ENCODE measurements at regions of chr12 and their contacts with region 1.

Region 1: GRCh38 chr12:106247674-106248311 is at the start of gene CKAP4:
- DNase-seq: peak; percentile 37
- H3K4me3 Mint-ChIP-seq: peak within 1 kb of the TSS; percentile 66
- H3K27ac Mint-ChIP-seq: peak within 1 kb of the TSS; percentile 15
- H3K4me1 Mint-ChIP-seq: no peaks in the 10 kb centered on the region
- H3K27me3 Mint-ChIP-seq: peaks cover 14% of the 10 kb centered on the region
- total RNA-seq, gene CKAP4: 4.8 and 5.1 TPM in 2 replicates

Region 2: DNA sequence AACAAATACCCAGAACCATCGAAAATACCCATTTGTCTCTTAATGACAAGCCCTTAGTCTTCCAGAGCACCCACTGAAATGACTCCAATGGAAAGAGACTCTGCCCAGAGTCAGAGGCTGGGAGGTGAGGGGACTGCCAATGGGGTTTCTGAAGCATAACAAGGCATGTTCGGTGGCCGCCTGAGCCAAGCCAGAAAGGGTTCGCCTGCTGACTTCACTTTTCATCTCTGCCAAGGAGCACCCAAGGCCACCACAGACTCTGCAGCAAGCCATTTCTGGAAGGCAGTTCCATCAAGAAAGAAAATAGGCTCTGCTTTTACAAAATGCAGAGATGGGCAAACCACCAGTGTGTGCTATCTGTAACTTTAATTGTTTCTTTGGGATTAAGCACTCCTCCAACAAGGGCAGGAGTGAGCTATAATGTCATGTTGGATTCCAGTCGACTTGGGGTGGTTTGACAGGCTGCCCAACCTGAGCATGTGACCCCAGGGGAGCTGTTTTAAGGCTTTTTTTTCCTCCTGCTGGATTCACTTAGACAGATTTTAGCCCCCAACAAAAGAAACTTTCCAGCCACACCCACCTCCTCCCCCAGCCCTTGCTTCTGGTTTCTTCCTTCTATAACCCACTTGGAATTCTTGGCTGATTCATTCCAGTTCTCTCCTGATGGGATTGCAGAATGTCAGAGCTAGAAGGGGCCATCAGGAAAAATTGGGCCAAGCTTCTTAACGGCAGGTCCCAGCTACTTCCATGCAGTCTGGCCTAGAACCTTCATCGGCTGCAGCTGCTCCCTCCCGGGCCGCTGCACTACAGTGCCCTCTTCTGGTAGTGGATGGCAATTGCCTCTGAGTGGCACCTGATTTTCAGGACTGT is 24.1 kb before region 1 on chr12:
- intact Hi-C with region 1: loop called (anchors 2 kb)
- DNase-seq: peak; percentile 59
- H3K4me3 Mint-ChIP-seq: no peak overlapping the region
- H3K27ac Mint-ChIP-seq: no peak overlapping the region
- H3K4me1 Mint-ChIP-seq: peaks cover 29% of the 10 kb centered on the region
- H3K27me3 Mint-ChIP-seq: peaks cover 3% of the 10 kb centered on the region

Region 3: GRCh38 chr12:106282457-106283097 is 34.8 kb after region 1 on chr12:
- intact Hi-C with region 1: loop called (anchors 2 kb)
- DNase-seq: peak; percentile 19
- H3K4me3 Mint-ChIP-seq: no peak overlapping the region
- H3K27ac Mint-ChIP-seq: no peak overlapping the region
- H3K4me1 Mint-ChIP-seq: peaks cover 13% of the 10 kb centered on the region
- H3K27me3 Mint-ChIP-seq: peaks cover 6% of the 10 kb centered on the region

Region 4: DNA sequence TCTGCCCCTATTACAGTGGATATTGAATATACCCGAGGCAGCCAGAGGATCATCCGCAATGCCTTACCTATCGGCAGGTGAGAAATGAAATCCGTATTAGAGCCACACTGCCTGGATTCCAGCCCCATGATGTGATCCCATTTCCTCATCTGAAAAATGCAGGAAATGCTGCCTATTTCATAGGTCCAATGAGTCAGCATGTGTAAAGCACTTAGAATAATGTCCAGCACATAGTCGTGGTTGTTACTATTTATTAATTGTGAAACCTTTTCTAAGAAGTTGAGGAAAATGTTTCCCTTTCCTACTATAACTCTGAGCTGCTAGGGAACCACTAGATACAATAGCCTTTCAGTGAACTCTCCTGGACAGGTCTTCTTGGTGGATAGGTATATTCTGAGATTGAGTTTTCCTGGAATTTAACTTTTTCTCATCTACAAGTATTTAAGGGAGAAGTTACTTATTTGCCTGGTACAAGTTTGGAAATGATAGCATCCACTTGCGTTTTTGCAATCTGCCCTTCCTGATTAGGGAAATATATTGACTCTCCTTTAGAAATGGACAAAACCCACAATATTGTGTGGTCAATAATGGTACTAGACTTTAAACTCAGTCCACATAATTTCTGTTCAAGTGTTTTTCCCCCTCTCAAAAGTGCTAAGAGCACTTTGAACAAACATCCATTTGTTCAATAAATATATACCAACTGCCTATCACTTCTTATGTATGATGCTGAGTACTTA is 122.0 kb after region 1 on chr12:
- intact Hi-C with region 1: no loop called
- DNase-seq: no peak
- H3K4me3 Mint-ChIP-seq: no peak overlapping the region
- H3K27ac Mint-ChIP-seq: no peak overlapping the region
- H3K4me1 Mint-ChIP-seq: no peaks in the 10 kb centered on the region
- H3K27me3 Mint-ChIP-seq: no peaks in the 10 kb centered on the region

Region 5: DNA sequence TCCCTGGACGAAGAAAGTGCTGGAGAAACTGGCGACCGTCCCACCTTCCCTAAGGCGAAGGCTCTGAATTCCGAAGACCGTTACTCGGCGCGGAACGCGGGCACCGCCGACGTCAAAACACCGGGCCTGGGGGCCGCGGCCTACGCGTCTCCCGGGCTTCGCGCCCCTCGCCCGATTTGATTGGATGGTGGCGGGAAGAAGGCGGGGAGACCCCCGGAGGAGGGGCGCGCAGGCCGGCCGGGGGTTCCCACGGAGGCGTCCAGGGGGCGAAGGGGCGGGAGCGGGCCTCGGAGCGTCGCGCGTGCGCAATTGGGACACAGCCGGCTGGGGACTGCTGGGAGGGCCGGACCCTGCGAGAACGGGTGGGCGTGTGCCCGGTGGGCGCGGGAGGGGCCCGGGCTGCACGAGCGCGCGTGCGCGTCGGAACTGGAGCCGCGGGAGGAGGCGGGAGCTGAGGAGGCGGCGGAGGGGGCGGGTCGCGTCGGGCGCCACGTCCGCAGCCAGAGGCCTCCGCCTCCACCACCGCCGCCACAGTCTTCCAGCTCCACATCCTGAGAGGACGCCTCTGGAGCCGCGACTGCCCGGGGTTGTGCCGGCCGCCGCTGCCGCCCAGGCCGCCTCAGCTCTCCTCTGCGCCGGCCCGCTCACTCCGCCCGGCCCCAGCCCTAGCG is 707.7 kb after region 1 on chr12 and contains the start of gene TMEM263:
- intact Hi-C with region 1: loop called (anchors 2 kb)
- DNase-seq: peak; percentile 90
- H3K4me3 Mint-ChIP-seq: peak within 1 kb of the TSS; percentile 97
- H3K27ac Mint-ChIP-seq: peak within 1 kb of the TSS; percentile 94
- H3K4me1 Mint-ChIP-seq: peaks cover 21% of the 10 kb centered on the region
- H3K27me3 Mint-ChIP-seq: peaks cover 3% of the 10 kb centered on the region
- total RNA-seq, gene TMEM263: 25.5 and 25.9 TPM in 2 replicates

Region 6: DNA sequence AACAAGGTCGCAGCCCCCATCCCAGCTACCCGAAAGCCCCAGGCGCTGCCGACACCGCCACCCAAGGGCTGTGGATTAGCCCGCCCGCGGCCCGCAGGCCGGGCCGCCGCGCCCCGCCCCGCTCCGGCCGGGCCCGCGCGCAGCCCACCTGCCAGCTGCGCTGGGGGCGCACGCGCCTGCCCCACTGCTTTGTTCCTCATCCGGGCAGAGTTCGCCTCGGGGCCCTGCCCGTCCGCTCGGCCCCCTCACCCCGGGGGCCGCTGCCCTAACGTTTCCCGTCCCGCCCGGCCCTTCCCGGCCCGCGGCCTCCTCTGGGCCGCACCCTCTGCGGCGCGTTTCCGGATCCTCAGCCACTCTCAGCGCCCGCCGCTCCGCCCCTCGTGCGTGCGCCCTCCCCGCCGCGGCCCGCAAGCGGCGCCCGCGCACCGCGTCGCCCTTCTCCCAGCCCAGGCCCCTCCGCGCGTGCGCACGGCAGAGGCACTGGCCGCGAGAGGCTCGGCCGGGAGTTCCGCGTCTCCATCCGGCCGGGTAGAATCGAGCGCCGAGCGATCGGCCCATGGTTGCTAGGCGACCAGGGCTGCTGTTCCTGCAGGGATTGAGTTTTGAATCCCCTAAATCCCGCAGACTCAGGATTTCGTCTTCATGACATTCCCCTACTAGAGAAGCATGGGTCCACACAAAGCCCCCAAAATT is 1513.2 kb after region 1 on chr12 and contains the start of gene PRDM4:
- intact Hi-C with region 1: loop called (anchors 5 kb)
- DNase-seq: peak; percentile 91
- H3K4me3 Mint-ChIP-seq: peak within 1 kb of the TSS; percentile 92
- H3K27ac Mint-ChIP-seq: peak within 1 kb of the TSS; percentile 89
- H3K4me1 Mint-ChIP-seq: peaks cover 40% of the 10 kb centered on the region
- H3K27me3 Mint-ChIP-seq: peaks cover 3% of the 10 kb centered on the region
- total RNA-seq, gene PRDM4: 28.1 and 30.2 TPM in 2 replicates